Activated T-helper 1 cell treated with anti-CD3 and anti-CD28 coated beads, Interleukin-12 subunit alpha, Interleukin-12 subunit beta, Interleukin-2, Interleukin-4 antibody, amounts not matched to agents 30 ng/mL and 10 ng/mL and 1 ng/mL, durations not matched to agents 14 hours and 24 hours and 36 hours (primary cell): ENCODE measurements at regions of chr3 and their contacts with region 1.

Region 1: DNA sequence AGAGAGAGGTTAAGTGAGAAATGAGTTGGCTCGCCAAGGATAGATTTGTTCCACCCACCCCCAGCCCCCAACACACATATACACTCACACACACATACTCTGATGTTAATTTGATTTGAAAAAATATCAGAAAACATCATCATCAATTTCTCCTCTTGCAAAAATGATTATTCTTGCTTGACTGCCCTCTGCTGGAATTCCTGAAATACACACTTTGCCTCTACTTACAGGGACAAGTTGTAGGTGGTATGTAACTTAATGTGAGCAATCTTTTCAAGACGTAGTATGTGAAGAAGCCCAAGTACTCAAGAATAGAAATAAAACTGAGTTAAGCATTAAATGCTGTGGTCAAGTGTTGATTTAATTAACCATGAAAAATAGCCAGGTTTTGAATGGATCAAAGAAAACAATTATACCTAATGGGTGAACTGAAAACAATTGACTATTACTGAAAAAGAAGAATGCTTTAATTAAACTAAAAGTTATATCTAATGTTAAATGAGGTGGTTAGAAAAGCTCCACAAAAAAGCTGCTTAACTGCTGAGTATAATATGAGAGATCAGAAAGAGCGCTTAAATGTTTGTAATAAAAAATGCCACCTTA is 46.6 kb upstream of the MDFIC2 start:
- DNase-seq: no peak
- H3K4me3 Mint-ChIP-seq: no peak overlapping the region
- H3K27ac Mint-ChIP-seq: no peak overlapping the region
- H3K4me1 Mint-ChIP-seq: no peaks in the 10 kb centered on the region
- H3K27me3 Mint-ChIP-seq: peaks cover 5% of the 10 kb centered on the region

Region 2: GRCh38 chr3:69324362-69325025 is 1034.6 kb before region 1 on chr3:
- intact Hi-C with region 1: no loop called
- DNase-seq: no peak
- H3K4me3 Mint-ChIP-seq: no peak overlapping the region
- H3K27ac Mint-ChIP-seq: peak overlapping the region; percentile 85
- H3K4me1 Mint-ChIP-seq: peaks cover 56% of the 10 kb centered on the region
- H3K27me3 Mint-ChIP-seq: peaks cover 1% of the 10 kb centered on the region

Region 3: GRCh38 chr3:70064194-70064779 is 294.8 kb before region 1 on chr3:
- intact Hi-C with region 1: loop called (anchors 1 kb)
- DNase-seq: no peak
- H3K4me3 Mint-ChIP-seq: no peak overlapping the region
- H3K27ac Mint-ChIP-seq: no peak overlapping the region
- H3K4me1 Mint-ChIP-seq: no peaks in the 10 kb centered on the region
- H3K27me3 Mint-ChIP-seq: no peaks in the 10 kb centered on the region

Region 4: DNA sequence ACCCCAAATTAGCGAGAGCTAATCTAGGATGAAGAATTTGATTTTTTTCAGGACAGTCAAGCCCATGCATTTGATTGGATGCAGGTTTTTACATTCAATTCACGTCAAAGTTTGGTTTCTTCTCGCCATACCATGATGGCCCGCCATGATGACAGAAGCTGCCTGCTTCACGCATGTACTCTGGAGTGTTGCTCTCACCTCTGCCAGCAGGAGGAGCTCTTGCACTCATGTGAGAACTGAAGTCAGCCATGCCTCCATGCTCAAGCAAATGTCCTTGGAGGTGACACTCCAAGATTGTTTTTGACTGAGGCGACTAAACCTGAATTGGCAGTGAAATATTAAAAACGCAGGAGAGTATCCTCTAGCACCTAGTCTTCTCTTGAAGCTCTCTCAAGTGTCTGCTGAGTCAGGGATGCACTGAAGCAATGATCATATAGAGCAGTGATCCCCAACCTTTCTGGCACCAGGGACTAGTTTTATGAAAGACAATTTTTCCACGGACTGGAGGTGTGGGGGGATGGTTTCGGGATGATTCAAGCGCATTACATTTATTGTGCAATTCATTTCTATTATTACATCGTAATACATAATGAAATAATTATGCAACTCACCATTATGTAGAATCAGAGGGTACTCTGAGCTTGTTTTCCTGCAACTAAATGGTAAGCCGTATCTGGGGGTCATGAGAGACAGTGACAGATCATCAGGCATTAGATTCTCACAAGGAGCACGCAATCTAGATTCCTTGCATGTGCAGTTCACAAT is 238.5 kb before region 1 on chr3:
- intact Hi-C with region 1: loop called (anchors 2 kb)
- DNase-seq: peak; percentile 23
- H3K4me3 Mint-ChIP-seq: no peak overlapping the region
- H3K27ac Mint-ChIP-seq: no peak overlapping the region
- H3K4me1 Mint-ChIP-seq: no peaks in the 10 kb centered on the region
- H3K27me3 Mint-ChIP-seq: peaks cover 2% of the 10 kb centered on the region

Region 5: GRCh38 chr3:70273492-70273891 is 85.6 kb before region 1 on chr3:
- intact Hi-C with region 1: no loop called
- DNase-seq: no peak
- H3K4me3 Mint-ChIP-seq: no peak overlapping the region
- H3K27ac Mint-ChIP-seq: no peak overlapping the region
- H3K4me1 Mint-ChIP-seq: no peaks in the 10 kb centered on the region
- H3K27me3 Mint-ChIP-seq: no peaks in the 10 kb centered on the region